ENCODE measurements at regions of chr19 and their contacts with region 1.

Region 1: DNA sequence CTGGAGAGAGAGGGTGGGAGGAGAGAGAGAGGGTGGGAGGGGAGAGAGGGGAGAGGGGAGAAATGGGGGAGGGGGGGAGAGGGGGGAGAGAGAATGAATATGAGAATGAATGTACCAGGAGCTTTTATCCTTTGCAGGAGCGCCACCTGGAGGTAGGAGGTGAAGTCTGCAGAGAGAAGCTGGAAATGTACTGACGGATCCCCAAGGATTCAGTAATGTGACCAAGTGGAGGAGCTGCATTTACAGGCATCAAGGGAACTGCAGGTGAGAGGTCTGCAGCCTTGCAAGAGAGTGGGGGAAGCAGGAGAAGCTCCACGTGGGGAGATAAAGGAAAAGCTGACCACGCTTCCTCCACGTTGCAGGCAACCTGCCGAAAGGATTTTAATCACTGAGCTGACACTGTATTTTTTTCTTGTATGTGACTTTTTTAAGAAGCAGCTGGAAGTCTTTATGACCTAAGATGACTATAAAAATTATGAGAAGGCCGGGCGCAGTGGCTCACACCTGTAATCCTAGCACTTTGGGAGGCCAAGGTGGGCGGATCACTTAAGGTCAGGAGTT is 33.7 kb downstream of the VSTM1 start:
- DNase-seq: peak; percentile 66 to 71
- H3K4me3 ChIP-seq: no peak overlapping the region
- H3K27ac ChIP-seq: no peak overlapping the region
- H3K4me1 ChIP-seq: peaks cover 0 to 5% (median 0%) of the 10 kb centered on the region in 4 donors
- H3K27me3 ChIP-seq: peaks cover 0 to 86% (median 0%) of the 10 kb centered on the region in 3 donors
- CTCF ChIP-seq: peak in 4 of 7 experiments; percentile 37 to 67 (median 42)
- EP300 ChIP-seq: no peak
- POLR2A ChIP-seq: no peak

Region 2: GRCh38 chr19:53792721-53793433 is 237.1 kb before region 1 on chr19:
- intact Hi-C with region 1: loop called (anchors 5 kb)
- DNase-seq: peak; percentile 88 to 93
- H3K4me3 ChIP-seq: no peak overlapping the region
- H3K27ac ChIP-seq: no peak overlapping the region
- H3K4me1 ChIP-seq: no peaks in the 10 kb centered on the region
- H3K27me3 ChIP-seq: peaks cover 0 to 2% (median 0%) of the 10 kb centered on the region in 3 donors
- CTCF ChIP-seq: peak in 6 of 7 experiments; percentile 18 to 98 (median 94)
- EP300 ChIP-seq: no peak
- POLR2A ChIP-seq: no peak

Region 3: DNA sequence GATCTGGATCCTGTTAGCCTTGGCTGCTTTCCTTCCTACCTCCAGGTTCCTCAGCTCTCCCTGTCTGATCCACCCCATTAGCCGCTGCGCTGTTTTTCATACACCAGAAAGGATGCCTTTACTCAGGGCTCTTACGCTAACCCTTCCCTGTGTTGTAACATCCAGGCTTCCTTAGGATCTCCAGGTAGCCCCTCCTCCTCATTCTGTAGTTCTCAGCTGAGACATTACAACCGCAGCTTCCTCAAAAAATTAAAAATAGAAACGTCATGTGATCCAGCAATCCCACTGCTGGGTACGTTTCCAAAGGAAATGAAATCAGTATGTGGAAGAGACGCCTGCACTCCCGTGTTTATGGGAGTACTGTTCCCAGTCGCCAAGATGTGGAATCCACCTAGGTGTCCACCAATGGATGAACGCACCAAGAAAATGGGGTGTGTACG is 180.8 kb before region 1 on chr19:
- intact Hi-C with region 1: loop called (anchors 10 kb)
- DNase-seq: peak in 1 of 2 donors; percentile 48
- H3K4me3 ChIP-seq: no peak overlapping the region
- H3K27ac ChIP-seq: peak overlapping the region in 2 of 5 donors; percentile 33 to 43
- H3K4me1 ChIP-seq: peaks cover 0 to 16% (median 0%) of the 10 kb centered on the region in 4 donors
- H3K27me3 ChIP-seq: peaks cover 0 to 53% (median 0%) of the 10 kb centered on the region in 3 donors
- CTCF ChIP-seq: no peak
- EP300 ChIP-seq: no peak
- POLR2A ChIP-seq: no peak

Region 4: GRCh38 chr19:53883206-53883605 is 146.8 kb before region 1 on chr19:
- intact Hi-C with region 1: no loop called
- DNase-seq: peak in 1 of 2 donors; percentile 36
- H3K4me3 ChIP-seq: no peak overlapping the region
- H3K27ac ChIP-seq: no peak overlapping the region
- H3K4me1 ChIP-seq: peaks cover 13 to 42% (median 32%) of the 10 kb centered on the region in 4 donors
- H3K27me3 ChIP-seq: peaks cover 18 to 78% (median 34%) of the 10 kb centered on the region in 3 donors
- CTCF ChIP-seq: no peak
- EP300 ChIP-seq: no peak
- POLR2A ChIP-seq: no peak

Region 5: DNA sequence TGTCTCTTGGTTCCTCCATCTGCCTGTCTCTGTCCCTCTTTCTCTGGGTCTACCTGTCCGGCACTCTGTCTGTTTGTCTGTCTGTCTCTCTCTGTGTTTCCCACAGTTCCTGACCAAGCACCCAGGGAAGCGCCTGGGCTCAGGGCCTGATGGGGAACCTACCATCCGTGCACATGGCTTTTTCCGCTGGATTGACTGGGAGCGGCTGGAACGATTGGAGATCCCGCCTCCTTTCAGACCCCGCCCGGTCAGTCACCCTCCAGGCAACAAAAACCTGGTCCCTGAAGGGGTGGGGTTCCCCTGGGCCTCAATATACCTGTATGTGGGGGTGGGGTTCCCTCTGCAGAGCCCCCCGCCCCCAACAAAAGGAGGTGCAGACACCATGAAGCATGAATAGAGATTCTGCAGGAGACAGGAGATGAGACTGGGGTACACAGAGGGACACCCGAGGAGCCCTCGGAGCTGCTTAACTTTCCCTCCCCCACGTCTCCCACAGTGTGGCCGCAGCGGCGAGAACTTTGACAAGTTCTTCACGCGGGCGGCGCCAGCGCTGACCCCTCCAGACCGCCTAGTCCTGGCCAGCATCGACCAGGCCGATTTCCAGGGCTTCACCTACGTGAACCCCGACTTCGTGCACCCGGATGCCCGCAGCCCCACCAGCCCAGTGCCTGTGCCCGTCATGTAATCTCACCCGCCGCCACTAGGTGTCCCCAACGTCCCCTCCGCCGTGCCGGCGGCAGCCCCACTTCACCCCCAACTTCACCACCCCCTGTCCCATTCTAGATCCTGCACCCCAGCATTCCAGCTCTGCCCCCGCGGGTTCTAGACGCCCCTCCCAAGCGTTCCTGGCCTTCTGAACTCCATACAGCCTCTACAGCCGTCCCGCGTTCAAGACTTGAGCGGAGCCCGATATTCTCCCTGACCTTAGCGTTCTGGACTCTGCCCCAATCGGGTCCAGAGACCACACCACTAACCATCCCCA is 123.5 kb before region 1 on chr19:
- intact Hi-C with region 1: loop called (anchors 10 kb)
- DNase-seq: peak; percentile 44 to 66
- H3K4me3 ChIP-seq: no peak overlapping the region
- H3K27ac ChIP-seq: no peak overlapping the region
- H3K4me1 ChIP-seq: peaks cover 9 to 40% (median 25%) of the 10 kb centered on the region in 4 donors
- H3K27me3 ChIP-seq: peaks cover 20 to 98% (median 61%) of the 10 kb centered on the region in 3 donors
- CTCF ChIP-seq: peak in 5 of 7 experiments; percentile 42 to 90 (median 84)
- EP300 ChIP-seq: no peak
- POLR2A ChIP-seq: no peak

Measured in stomach (tissue), 19 donors.